WTC11 (cell line): ENCODE measurements at regions of chr11 and their contacts with region 1.

Region 1: GRCh38 chr11:6362873-6363678 is 27.2 kb upstream of the SMPD1 start:
- DNase-seq: peak; percentile 89
- ATAC-seq: peak; percentile 99
- H3K4me3 Mint-ChIP-seq: no peak overlapping the region
- H3K27ac Mint-ChIP-seq: no peak overlapping the region
- H3K4me1 Mint-ChIP-seq: peaks cover 4% of the 10 kb centered on the region; the same call in 1 of the 2 replicates
- H3K27me3 Mint-ChIP-seq: no peaks in the 10 kb centered on the region
- CTCF ChIP-seq: peak; percentile 76

Region 2: GRCh38 chr11:5992604-5993251 is 370.3 kb before region 1 on chr11:
- CTCF ChIA-PET with region 1: interaction called, 34 read pairs
- POLR2A ChIA-PET with region 1: no interaction called
- DNase-seq: no peak
- ATAC-seq: peak; percentile 91
- H3K4me3 Mint-ChIP-seq: no peak overlapping the region
- H3K27ac Mint-ChIP-seq: no peak overlapping the region
- H3K4me1 Mint-ChIP-seq: 0 out of 2 replicates have a peak, but pooled peaks cover 3% of the 10 kb centered on the region
- H3K27me3 Mint-ChIP-seq: no peaks in the 10 kb centered on the region; the same call in 1 of the 2 replicates
- CTCF ChIP-seq: peak; percentile 56

Region 3: DNA sequence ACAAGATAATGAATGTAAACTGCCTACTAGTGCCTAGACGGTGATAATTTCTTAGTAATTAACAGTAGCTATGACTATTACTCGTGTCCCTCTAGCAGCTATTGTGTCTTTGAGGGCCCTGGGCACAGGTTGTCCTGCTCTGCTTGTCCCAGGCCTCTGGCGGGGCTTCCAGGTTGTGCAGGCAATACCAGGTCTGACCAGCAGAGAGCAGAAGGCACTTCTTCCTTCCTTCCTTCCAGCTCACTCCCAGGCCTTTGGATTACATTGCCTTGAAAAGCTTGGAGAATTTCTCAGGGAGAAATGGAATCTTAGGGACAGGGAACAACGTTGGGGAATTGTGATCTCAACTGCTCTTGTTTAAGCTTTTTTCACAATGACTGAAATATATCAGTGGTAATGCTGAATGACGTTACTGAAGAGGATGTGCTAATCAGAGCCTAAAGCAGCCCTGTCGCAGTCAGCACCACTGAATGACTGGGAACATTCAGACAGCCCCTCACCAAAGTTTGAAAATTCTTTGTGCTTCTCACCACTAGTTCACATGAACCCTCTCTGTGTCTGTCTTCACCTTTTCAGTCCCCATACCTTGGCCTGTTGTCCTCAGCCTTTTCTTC is 111.8 kb before region 1 on chr11:
- CTCF ChIA-PET with region 1: interaction called, 146 read pairs
- POLR2A ChIA-PET with region 1: no interaction called
- DNase-seq: peak; percentile 89
- ATAC-seq: peak; percentile 99
- H3K4me3 Mint-ChIP-seq: no peak overlapping the region
- H3K27ac Mint-ChIP-seq: no peak overlapping the region
- H3K4me1 Mint-ChIP-seq: peaks cover 8% of the 10 kb centered on the region
- H3K27me3 Mint-ChIP-seq: peaks cover 4% of the 10 kb centered on the region
- CTCF ChIP-seq: peak; percentile 80

Region 4: DNA sequence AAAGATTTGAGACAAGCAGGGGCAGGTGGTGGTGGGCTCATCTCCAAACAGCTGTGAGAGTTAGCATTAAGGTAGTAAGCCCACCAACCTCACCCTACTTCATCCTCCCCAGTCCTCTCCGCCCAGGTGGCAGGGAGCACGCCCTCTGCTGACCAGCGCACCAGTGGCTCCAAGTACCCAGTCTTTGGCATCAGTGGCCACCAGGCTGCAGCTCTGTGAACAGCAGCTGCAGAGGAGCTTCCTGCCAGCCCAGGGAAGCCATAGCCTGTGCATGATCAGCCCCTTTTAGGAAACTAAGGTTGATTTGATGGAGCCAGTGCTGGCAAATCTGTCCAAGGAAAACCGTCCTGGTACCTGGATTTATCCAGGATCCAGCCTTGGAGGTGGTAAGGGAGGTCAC is 64.5 kb before region 1 on chr11:
- CTCF ChIA-PET with region 1: interaction called, 33 read pairs
- POLR2A ChIA-PET with region 1: no interaction called
- DNase-seq: peak; percentile 86
- ATAC-seq: peak; percentile 96
- H3K4me3 Mint-ChIP-seq: no peak overlapping the region
- H3K27ac Mint-ChIP-seq: peak overlapping the region; percentile 40; the same call in 1 of the 2 replicates
- H3K4me1 Mint-ChIP-seq: peaks cover 57% of the 10 kb centered on the region
- H3K27me3 Mint-ChIP-seq: no peaks in the 10 kb centered on the region
- CTCF ChIP-seq: peak; percentile 52; the same call in 1 of the 2 replicates

Region 5: GRCh38 chr11:6345366-6345765 is 17.7 kb before region 1 on chr11:
- CTCF ChIA-PET with region 1: interaction called, 11 read pairs
- POLR2A ChIA-PET with region 1: no interaction called
- DNase-seq: no peak
- ATAC-seq: no peak
- H3K4me3 Mint-ChIP-seq: no peak overlapping the region
- H3K27ac Mint-ChIP-seq: no peak overlapping the region
- H3K4me1 Mint-ChIP-seq: peaks cover 9% of the 10 kb centered on the region
- H3K27me3 Mint-ChIP-seq: no peaks in the 10 kb centered on the region
- CTCF ChIP-seq: no peak

Region 6: GRCh38 chr11:6431861-6432260 is 68.8 kb after region 1 on chr11:
- CTCF ChIA-PET with region 1: interaction called, 28 read pairs
- POLR2A ChIA-PET with region 1: no interaction called
- DNase-seq: no peak
- ATAC-seq: no peak
- H3K4me3 Mint-ChIP-seq: no peak overlapping the region
- H3K27ac Mint-ChIP-seq: no peak overlapping the region
- H3K4me1 Mint-ChIP-seq: peaks cover 7% of the 10 kb centered on the region
- H3K27me3 Mint-ChIP-seq: peaks cover 8% of the 10 kb centered on the region
- CTCF ChIP-seq: no peak

Region 7: DNA sequence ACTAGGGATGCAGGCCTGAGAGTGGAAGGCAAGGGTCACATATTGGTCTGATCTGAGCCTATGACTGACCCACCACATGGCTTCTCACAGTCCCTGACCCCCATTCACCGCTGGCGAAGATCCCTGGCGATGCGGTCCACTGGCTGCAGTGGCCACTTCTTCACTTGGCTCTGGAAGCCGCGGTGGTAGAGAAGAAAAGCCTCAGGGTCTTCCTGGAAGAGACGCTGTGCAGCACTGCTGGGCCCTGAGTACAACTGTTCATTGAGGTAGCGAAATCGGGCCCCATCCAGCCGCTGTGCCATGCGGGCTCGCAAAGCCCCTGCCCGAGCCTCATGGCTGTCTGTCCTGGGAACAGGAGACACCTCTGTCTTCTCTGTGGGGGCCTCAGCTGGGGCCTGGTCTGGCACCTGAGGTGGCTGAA is 238.0 kb after region 1 on chr11:
- CTCF ChIA-PET with region 1: no interaction called
- POLR2A ChIA-PET with region 1: no interaction called
- DNase-seq: no peak
- ATAC-seq: no peak
- H3K4me3 Mint-ChIP-seq: no peak overlapping the region
- H3K27ac Mint-ChIP-seq: no peak overlapping the region
- H3K4me1 Mint-ChIP-seq: peaks cover 2% of the 10 kb centered on the region; the same call in 1 of the 2 replicates
- H3K27me3 Mint-ChIP-seq: no peaks in the 10 kb centered on the region
- CTCF ChIP-seq: no peak